ENCODE measurements at regions of chr14 and their contacts with region 1.

Region 1: GRCh38 chr14:59126710-59127432 is 61.6 kb upstream of the DAAM1 start:
- DNase-seq: peak; percentile 33
- ATAC-seq: peak; percentile 77
- H3K4me3 Mint-ChIP-seq: no peak overlapping the region
- H3K27ac Mint-ChIP-seq: no peak overlapping the region
- H3K4me1 Mint-ChIP-seq: no peaks in the 10 kb centered on the region
- H3K27me3 Mint-ChIP-seq: peaks cover 8% of the 10 kb centered on the region

Region 2: DNA sequence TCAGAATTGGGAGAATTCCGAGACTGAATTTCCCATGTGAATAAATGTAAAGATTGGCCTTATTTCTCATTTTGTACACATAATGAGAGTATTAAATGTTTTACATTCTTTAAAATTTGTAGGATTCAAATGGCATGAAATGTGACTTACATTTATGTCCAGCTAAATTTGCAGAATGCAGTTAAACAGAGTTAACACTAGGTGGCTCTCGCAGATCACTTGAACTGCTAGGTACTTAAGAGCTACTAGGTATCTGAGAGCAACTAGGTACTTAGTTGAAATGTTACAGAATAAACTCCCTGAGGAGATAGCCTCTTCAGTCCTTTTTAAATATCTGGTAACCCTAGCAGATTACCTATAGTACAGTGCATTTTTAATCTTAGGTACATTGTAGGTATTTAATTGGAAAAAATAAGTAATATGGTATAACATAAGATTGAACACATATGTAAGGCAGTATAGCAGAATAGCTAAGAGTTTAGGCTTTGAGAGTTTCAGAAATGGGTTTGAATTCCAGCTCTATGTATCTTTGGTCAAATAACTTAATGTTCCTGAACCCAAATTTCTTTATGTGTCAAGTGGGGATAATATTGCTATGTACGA is 625.6 kb before region 1 on chr14:
- CTCF ChIA-PET with region 1: interaction called, 4 read pairs
- POLR2A ChIA-PET with region 1: no interaction called
- intact Hi-C with region 1: loop called in 1 of 2 experiments (anchors 2 kb)
- DNase-seq: peak; percentile 33
- ATAC-seq: peak; percentile 64
- H3K4me3 Mint-ChIP-seq: no peak overlapping the region
- H3K27ac Mint-ChIP-seq: no peak overlapping the region
- H3K4me1 Mint-ChIP-seq: no peaks in the 10 kb centered on the region
- H3K27me3 Mint-ChIP-seq: no peaks in the 10 kb centered on the region

Region 3: GRCh38 chr14:59028476-59029202 is 98.2 kb before region 1 on chr14:
- CTCF ChIA-PET with region 1: interaction called, 3 read pairs
- POLR2A ChIA-PET with region 1: no interaction called
- intact Hi-C with region 1: loop called (anchors 1 to 5 kb)
- DNase-seq: peak; percentile 66
- ATAC-seq: peak; percentile 79
- H3K4me3 Mint-ChIP-seq: no peak overlapping the region
- H3K27ac Mint-ChIP-seq: no peak overlapping the region
- H3K4me1 Mint-ChIP-seq: peaks cover 2% of the 10 kb centered on the region
- H3K27me3 Mint-ChIP-seq: peaks cover 12% of the 10 kb centered on the region

Region 4: DNA sequence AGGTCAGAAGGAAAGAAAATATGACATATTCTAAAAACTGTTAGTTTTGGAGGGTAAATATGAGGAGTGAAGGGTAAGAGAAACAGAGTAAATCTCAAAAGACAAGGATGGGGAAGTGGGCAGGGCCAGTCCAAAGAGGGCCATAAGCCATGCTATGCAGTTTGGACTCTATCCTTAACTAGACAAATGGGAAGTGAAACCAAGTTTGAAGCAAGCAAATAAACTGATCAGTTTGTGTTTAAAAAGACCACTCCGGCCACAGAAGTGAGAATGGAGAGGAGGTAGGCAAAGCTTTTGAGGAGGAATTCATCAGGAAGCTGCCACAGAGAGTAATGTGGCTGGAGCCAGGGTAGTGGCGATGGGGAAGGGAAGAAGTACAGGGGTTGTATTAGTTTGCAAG is 24.1 kb after region 1 on chr14:
- CTCF ChIA-PET with region 1: no interaction called
- POLR2A ChIA-PET with region 1: no interaction called
- intact Hi-C with region 1: loop called in 1 of 2 experiments (anchors 1 kb)
- DNase-seq: no peak
- ATAC-seq: no peak
- H3K4me3 Mint-ChIP-seq: no peak overlapping the region
- H3K27ac Mint-ChIP-seq: no peak overlapping the region
- H3K4me1 Mint-ChIP-seq: peaks cover 16% of the 10 kb centered on the region
- H3K27me3 Mint-ChIP-seq: no peaks in the 10 kb centered on the region

Region 5: GRCh38 chr14:59389936-59390335 is 263.1 kb after region 1 on chr14:
- CTCF ChIA-PET with region 1: no interaction called
- POLR2A ChIA-PET with region 1: no interaction called
- intact Hi-C with region 1: no loop called
- DNase-seq: no peak
- ATAC-seq: no peak
- H3K4me3 Mint-ChIP-seq: no peak overlapping the region
- H3K27ac Mint-ChIP-seq: no peak overlapping the region
- H3K4me1 Mint-ChIP-seq: no peaks in the 10 kb centered on the region
- H3K27me3 Mint-ChIP-seq: peaks cover 2% of the 10 kb centered on the region

Region 6: GRCh38 chr14:59406454-59407245 is 279.8 kb after region 1 on chr14:
- CTCF ChIA-PET with region 1: no interaction called
- POLR2A ChIA-PET with region 1: no interaction called
- intact Hi-C with region 1: no loop called
- DNase-seq: no peak
- ATAC-seq: no peak
- H3K4me3 Mint-ChIP-seq: no peak overlapping the region
- H3K27ac Mint-ChIP-seq: no peak overlapping the region
- H3K4me1 Mint-ChIP-seq: no peaks in the 10 kb centered on the region
- H3K27me3 Mint-ChIP-seq: peaks cover 14% of the 10 kb centered on the region

Region 7: DNA sequence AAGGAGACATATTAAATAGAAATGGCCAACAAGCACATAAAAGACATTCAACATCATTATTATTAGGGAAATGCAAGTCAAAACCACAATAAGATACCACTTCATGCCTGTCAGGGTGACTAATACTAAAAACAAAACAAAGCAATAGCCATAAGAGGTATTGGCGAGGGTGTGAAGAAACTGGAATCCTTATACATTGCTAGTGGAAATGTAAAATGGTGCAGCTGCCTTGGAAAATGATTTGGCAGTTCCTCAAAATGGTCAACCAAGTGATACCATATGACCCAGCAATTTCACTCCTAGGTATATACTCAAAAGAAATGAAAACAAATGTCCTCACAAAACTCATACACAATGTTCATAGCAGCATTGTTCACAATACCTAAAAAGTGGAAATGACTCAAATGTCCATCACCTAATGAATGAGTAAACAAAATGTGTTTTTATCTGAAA is 311.4 kb after region 1 on chr14:
- CTCF ChIA-PET with region 1: interaction called, 21 read pairs
- POLR2A ChIA-PET with region 1: no interaction called
- intact Hi-C with region 1: no loop called
- DNase-seq: no peak
- ATAC-seq: no peak
- H3K4me3 Mint-ChIP-seq: no peak overlapping the region
- H3K27ac Mint-ChIP-seq: no peak overlapping the region
- H3K4me1 Mint-ChIP-seq: no peaks in the 10 kb centered on the region
- H3K27me3 Mint-ChIP-seq: no peaks in the 10 kb centered on the region

Region 8: GRCh38 chr14:59507063-59507780 is 380.4 kb after region 1 on chr14:
- CTCF ChIA-PET with region 1: interaction called, 3 read pairs
- POLR2A ChIA-PET with region 1: no interaction called
- intact Hi-C with region 1: loop called in 1 of 2 experiments (anchors 5 kb)
- DNase-seq: peak; percentile 76
- ATAC-seq: peak; percentile 95
- H3K4me3 Mint-ChIP-seq: no peak overlapping the region
- H3K27ac Mint-ChIP-seq: no peak overlapping the region
- H3K4me1 Mint-ChIP-seq: peaks cover 5% of the 10 kb centered on the region
- H3K27me3 Mint-ChIP-seq: peaks cover 3% of the 10 kb centered on the region

Measured in activated CD4-positive, alpha-beta T cell treated with anti-CD3 and anti-CD28 coated beads for 36 hours (primary cell).